GM13976 (cell line): ENCODE measurements at regions of chr12 and their contacts with region 1.

Region 1: DNA sequence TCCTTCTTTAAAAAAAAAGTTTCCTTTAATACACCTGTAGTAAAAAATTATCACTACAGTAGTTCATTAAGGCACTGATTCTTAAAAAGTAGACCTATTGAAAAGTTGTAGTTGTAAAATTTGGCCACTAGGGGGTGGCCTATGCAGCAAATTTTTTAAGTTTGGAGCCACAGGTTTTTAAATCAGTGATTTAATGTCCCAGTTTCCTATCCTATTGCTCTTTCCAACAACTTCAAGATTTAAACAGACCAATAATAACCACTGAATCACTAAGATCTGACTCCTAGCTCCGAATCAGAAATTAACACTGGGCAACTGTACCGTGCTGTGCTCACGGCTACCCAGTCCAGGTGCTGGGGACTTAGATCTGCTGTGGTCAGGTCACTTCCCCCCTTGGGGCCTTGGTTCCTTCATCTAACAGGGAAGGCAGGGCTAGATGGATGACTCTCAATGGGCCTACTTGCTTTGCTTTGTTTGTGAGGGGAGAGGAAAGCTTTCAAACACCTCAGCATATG is 279.3 kb downstream of the MED13L start:
- DNase-seq: peak; percentile 49
- CTCF ChIP-seq: peak; percentile 41

Region 2: DNA sequence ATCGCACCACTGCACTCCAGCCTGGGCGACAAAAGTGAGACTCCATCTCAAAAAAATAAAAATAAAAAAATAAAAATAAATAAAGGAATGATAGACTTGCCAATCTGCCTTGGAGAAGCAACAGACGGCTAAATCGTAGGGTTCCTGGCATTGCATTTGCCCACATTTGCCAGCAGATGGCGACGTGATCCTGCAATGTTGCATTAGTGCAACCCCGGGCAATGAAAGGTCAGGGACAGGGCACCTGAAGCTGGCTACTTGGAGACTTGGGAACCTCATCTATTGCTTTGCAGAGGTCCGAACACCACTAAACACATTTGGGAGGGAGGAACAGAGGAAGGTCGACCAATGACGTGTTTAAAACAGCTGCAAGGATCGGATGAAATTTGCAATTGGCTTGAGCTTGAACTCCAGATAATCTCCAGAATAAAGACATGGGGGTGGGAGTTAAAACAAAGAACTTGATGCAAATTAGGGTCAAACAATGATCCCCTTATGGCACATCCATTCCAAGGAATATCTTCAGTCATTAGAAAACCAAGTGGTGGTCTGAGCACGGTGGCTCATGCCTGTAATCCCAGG is 705.1 kb after region 1 on chr12:
- in situ Hi-C with region 1: loop called (anchors 25 kb)
- DNase-seq: peak; percentile 76
- CTCF ChIP-seq: peak; percentile 91